GM12878 (cell line): ENCODE measurements at regions of chr9 and their contacts with region 1.

Region 1: GRCh38 chr9:128067876-128068613 is at the start of gene SLC25A25:
- DNase-seq: peak; percentile 96
- ATAC-seq: peak; percentile 81
- H3K4me3 ChIP-seq: peak within 1 kb of the TSS; percentile 90
- H3K27ac ChIP-seq: peak within 1 kb of the TSS; percentile 99
- H3K4me1 ChIP-seq: peaks cover 30% of the 10 kb centered on the region
- H3K27me3 ChIP-seq: no peaks in the 10 kb centered on the region
- CTCF ChIP-seq: 0 out of 6 replicates have a peak, but pooled peaks of 1 of the 3 experiments have one; percentile 3
- EP300 ChIP-seq: no peak
- POLR2A ChIP-seq: peak; percentile 86
- RAD21 ChIP-seq: no peak
- polyA plus RNA-seq, gene SLC25A25: 0.04 TPM in 1 of 2 experiments, not detected in the other

Region 2: DNA sequence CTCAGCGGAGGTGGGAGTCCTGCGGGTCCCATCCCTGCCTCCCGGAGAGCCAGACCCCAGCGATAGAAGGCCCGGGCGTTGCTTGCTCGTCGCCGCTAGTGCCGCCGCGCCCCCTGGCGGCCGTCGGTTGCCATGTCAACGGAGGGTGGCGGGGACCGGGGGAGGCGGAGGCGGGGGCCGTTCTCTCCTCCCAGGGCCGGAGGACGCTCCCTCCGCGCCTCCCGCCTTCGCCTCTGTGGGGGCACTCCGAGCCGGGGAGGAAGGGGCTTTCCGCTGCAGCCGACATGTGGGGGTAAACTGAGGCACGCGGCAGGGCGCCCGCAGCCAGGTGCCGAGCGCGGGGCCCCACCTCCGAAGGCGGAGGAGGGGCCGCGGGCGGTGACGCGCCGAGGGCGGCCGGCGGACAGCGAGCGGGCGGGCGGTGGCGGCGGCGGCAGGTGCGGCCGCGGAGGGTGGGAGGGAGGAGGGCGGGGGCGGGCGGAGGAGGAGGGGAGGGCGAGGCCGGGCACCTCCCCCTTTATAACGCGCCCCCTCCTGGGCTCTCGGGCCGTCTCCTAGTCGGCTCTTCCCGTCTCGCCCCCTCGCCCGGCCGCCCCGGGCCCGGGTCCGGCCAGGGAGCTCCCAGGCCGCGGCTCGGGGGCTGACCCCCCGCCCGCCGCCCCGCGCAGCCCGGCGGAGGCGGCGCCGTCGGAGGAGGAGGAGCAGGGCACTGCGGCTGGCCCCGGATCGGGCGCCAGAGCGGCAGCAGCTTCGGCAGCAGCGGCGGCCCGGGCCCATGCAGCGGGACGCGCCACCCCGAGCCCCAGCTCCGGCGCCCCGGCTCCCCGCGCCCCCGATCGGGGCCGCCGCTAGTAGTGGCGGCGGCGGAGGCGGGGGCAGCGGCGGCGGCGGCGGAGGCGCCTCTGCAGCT is 282.8 kb before region 1 on chr9:
- CTCF ChIA-PET with region 1: no interaction called
- POLR2A ChIA-PET with region 1: no interaction called
- RAD21 ChIA-PET with region 1: no interaction called
- SMC1A ChIA-PET with region 1: no interaction called
- in situ Hi-C with region 1: no loop called
- intact Hi-C with region 1: loop called (anchors 10 kb)
- DNase-seq: no peak
- ATAC-seq: peak; percentile 59
- H3K4me3 ChIP-seq: peak overlapping the region; percentile 85
- H3K27ac ChIP-seq: peak overlapping the region; percentile 82
- H3K4me1 ChIP-seq: peaks cover 41% of the 10 kb centered on the region
- H3K27me3 ChIP-seq: no peaks in the 10 kb centered on the region
- CTCF ChIP-seq: peak; percentile 65 to 89 (median 82)
- EP300 ChIP-seq: no peak
- POLR2A ChIP-seq: peak; percentile 44
- RAD21 ChIP-seq: peak; percentile 78

Region 3: DNA sequence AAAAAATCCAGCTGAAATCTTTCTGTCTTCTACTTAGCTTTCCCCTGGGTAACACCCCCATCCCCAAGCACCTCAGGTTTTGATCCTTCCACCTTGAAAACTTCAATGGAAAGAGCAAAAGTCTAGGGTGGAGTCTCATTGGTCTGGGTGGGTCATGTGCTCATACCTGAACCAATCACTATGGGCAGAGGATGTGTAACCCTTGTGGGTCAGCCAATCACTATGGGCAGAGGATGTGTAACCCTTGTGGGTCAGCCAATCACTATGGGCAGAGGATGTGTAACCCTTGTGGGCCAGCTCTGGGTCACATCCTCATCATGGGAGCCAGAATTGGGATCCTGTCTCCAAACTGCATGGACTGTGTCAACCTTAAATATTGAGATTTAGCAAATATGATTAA is 19.4 kb before region 1 on chr9:
- CTCF ChIA-PET with region 1: interaction called, 4 read pairs
- POLR2A ChIA-PET with region 1: interaction called, 10 read pairs
- RAD21 ChIA-PET with region 1: no interaction called
- SMC1A ChIA-PET with region 1: interaction called, 9 read pairs
- in situ Hi-C with region 1: no loop called
- intact Hi-C with region 1: no loop called
- DNase-seq: no peak
- ATAC-seq: peak; percentile 93
- H3K4me3 ChIP-seq: no peak overlapping the region
- H3K27ac ChIP-seq: no peak overlapping the region
- H3K4me1 ChIP-seq: no peaks in the 10 kb centered on the region
- H3K27me3 ChIP-seq: no peaks in the 10 kb centered on the region; a peak in 2 of 4 replicates
- CTCF ChIP-seq: no peak
- EP300 ChIP-seq: no peak
- POLR2A ChIP-seq: no peak
- RAD21 ChIP-seq: no peak

Region 4: GRCh38 chr9:128094166-128094967 is 26.3 kb after region 1 on chr9:
- CTCF ChIA-PET with region 1: interaction called, 4 read pairs
- POLR2A ChIA-PET with region 1: interaction called, 12 read pairs
- RAD21 ChIA-PET with region 1: interaction called, 3 read pairs
- SMC1A ChIA-PET with region 1: interaction called, 21 read pairs
- in situ Hi-C with region 1: no loop called
- intact Hi-C with region 1: no loop called
- DNase-seq: no peak
- ATAC-seq: peak; percentile 99
- H3K4me3 ChIP-seq: no peak overlapping the region
- H3K27ac ChIP-seq: peak overlapping the region; percentile 51
- H3K4me1 ChIP-seq: peaks cover 25% of the 10 kb centered on the region
- H3K27me3 ChIP-seq: no peaks in the 10 kb centered on the region
- CTCF ChIP-seq: no peak
- EP300 ChIP-seq: no peak
- POLR2A ChIP-seq: no peak
- RAD21 ChIP-seq: no peak

Region 5: DNA sequence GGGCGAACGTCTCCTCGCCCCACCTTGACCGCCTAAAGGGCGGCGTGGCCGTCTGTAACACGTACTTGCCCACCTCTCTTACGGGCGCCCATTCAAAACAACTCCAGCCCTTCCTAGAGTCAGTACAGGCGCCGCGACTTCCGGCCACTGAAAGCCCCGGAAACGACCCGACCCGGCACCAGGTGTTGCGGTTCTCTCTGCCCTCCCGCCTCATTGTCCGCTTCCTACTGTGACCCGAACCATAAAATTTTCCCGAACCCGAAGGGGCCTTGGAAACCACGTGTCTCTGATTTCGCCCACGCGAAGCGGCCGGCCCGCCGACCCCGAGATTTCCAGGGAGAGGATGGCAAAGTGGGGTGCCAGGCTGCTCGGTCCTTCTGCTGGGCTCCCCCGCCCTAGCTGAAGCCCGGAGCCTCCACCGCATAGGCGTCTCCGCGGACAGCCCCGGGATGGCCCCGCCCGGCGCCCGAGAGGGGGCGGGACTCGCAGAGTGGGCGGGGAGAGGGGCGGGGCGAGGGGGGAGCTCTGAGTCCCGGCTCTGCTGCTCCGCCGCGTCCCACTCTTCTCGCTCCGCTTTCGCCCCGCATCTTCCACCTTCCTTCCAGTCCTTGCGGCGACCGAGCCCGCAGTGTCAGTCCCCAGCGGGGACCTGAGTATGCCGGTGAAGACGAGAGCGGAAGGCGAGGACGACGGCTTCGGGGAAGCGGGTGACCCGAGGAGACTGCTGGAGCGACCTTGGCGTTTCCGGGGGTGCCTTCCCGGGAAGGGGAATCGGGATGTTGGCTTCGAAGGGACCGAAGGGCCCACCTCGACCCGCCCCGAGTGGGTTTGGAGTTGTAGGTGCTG is 60.2 kb after region 1 on chr9:
- CTCF ChIA-PET with region 1: interaction called, 13 read pairs
- POLR2A ChIA-PET with region 1: interaction called, 9 read pairs
- RAD21 ChIA-PET with region 1: interaction called, 10 read pairs
- SMC1A ChIA-PET with region 1: interaction called, 4 read pairs
- in situ Hi-C with region 1: no loop called
- intact Hi-C with region 1: no loop called
- DNase-seq: peak; percentile 68
- ATAC-seq: peak; percentile 76
- H3K4me3 ChIP-seq: peak overlapping the region; percentile 88
- H3K27ac ChIP-seq: peak overlapping the region; percentile 99
- H3K4me1 ChIP-seq: peaks cover 14% of the 10 kb centered on the region; the same call in 1 of the 2 replicates
- H3K27me3 ChIP-seq: no peaks in the 10 kb centered on the region; a peak in 2 of 4 replicates
- CTCF ChIP-seq: no peak
- EP300 ChIP-seq: no peak
- POLR2A ChIP-seq: peak; percentile 46; the same call in 1 of the 2 replicates
- RAD21 ChIP-seq: no peak

Region 6: DNA sequence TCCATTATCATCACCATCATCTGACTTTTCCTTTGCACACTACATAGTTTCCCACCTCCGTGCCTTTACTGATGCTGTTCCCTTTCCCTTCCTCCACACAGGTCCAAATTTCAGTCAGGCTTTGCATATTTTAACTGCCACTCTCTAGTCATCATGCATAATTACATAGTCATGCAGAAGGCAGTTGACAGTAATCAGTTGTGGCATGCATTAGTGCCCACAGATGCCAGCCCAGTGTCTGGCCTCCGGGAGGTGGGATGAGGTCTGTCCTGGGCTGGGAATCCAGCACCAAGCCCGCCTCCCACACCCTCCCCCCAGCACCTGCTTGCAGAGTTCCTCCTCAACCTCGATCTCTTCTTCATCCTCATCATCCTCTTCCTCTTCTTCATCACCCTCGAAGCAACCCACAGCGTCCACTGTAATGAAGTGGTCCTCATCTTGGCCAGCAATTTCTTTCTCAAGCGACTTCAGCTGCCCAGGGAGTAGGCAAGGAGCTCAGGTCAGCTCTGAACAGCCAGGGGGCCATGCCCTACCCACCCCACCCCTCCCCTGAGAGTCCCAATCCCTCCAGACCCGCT is 100.8 kb after region 1 on chr9:
- CTCF ChIA-PET with region 1: no interaction called
- POLR2A ChIA-PET with region 1: no interaction called
- RAD21 ChIA-PET with region 1: no interaction called
- SMC1A ChIA-PET with region 1: no interaction called
- in situ Hi-C with region 1: no loop called
- intact Hi-C with region 1: no loop called
- DNase-seq: no peak
- ATAC-seq: no peak
- H3K4me3 ChIP-seq: no peak overlapping the region
- H3K27ac ChIP-seq: no peak overlapping the region
- H3K4me1 ChIP-seq: no peaks in the 10 kb centered on the region
- H3K27me3 ChIP-seq: no peaks in the 10 kb centered on the region
- CTCF ChIP-seq: no peak
- EP300 ChIP-seq: no peak
- POLR2A ChIP-seq: no peak
- RAD21 ChIP-seq: no peak

Region 7: DNA sequence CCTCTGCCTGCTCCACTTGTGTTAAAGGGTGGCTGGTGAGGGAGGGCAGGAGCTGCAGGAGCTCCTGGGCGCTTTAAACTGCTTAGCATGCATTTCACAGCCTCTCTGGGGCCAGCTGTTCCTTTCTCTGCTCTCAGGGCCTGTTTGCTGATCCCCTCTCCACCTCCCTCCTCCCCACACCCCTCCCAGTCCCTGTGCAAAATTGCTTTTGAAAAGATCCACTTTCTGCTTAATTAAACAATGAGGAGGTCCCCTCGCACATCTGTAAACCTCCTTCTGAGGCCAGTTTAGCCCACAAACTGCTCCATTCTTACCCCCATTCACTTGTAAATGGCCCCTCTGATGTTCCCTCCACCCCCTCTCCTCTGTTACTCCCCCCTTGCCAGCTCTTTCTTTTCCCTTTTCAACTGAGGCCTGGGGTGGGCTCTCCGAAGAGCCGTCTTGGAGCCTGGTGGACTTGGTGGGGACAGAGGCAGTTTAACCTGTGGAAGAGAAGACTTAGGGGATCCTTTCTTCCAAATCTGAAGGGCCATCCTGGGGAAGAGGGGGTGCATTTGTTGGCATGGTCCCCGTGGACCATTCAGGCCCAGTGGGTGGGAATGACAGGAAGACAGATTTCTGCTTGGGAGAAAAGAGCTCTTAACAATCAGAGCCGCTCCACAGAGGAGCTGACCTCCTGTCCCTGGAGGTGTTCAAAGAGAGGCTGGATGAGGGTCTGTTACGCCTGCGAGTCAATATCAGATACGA is 315.1 kb after region 1 on chr9:
- CTCF ChIA-PET with region 1: no interaction called
- POLR2A ChIA-PET with region 1: no interaction called
- RAD21 ChIA-PET with region 1: no interaction called
- SMC1A ChIA-PET with region 1: no interaction called
- in situ Hi-C with region 1: no loop called
- intact Hi-C with region 1: no loop called
- DNase-seq: no peak
- ATAC-seq: no peak
- H3K4me3 ChIP-seq: no peak overlapping the region
- H3K27ac ChIP-seq: no peak overlapping the region
- H3K4me1 ChIP-seq: no peaks in the 10 kb centered on the region
- H3K27me3 ChIP-seq: no peaks in the 10 kb centered on the region
- CTCF ChIP-seq: no peak
- EP300 ChIP-seq: no peak
- POLR2A ChIP-seq: no peak
- RAD21 ChIP-seq: no peak